ENCODE measurements at regions of chr5 and their contacts with region 1.

Region 1: GRCh38 chr5:151276697-151277096 is 23.7 kb downstream of the GM2A start:
- DNase-seq: no peak

Region 2: GRCh38 chr5:151239237-151239861 is 37.3 kb before region 1 on chr5:
- CTCF ChIA-PET with region 1: interaction called, 12 read pairs
- POLR2A ChIA-PET with region 1: no interaction called
- DNase-seq: peak; percentile 76

Region 3: GRCh38 chr5:151480384-151481293 is 203.9 kb after region 1 on chr5:
- CTCF ChIA-PET with region 1: no interaction called
- POLR2A ChIA-PET with region 1: no interaction called
- DNase-seq: no peak